ENCODE measurements at regions of chr15 and their contacts with region 1.

Region 1: GRCh38 chr15:92714477-92715401 is 59.2 kb upstream of the FAM174B start:
- DNase-seq: peak; percentile 71 to 83
- ATAC-seq: peak; percentile 92 to 94
- H3K4me3 ChIP-seq: peak overlapping the region; percentile 51
- H3K27ac ChIP-seq: peak overlapping the region; percentile 69 to 87
- H3K4me1 ChIP-seq: no peaks in the 10 kb centered on the region
- CTCF ChIP-seq: peak; percentile 99
- EP300 ChIP-seq: no peak
- POLR2A ChIP-seq: peak; percentile 49
- RAD21 ChIP-seq: peak; percentile 98 to 99

Region 2: DNA sequence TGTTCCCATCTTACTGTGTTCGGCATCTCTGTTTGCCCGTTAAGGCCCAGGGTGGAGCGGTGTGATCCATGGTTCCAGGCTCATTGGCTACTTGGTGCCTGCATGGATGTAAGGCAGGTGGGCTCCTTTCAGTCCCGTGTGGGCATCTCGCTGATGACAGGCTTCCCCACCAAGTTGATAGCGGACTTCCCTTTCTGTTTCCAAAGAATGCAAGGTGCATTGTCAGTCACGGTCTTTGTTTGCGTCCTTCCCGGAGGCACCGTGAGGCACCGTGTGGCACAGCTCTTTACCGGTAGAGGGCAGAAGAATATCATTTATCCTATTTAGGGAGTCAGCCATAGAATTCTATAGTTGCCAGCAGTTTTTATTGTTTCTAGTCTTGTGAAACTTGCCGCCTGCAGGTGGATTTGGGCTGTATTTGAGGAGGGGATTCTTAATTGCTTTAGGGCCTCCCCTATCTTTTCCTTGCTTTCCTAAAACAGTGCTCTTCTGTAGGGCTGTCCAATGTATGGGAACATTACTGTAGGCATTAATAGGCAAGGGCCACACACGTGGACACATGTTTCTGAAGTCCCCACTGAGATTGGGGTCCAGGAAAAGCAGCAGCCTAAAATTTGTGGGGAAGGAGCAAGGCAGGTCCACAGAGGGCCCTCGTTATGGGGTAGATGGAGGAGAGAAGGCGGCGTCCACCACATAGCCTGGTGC is 617.1 kb before region 1 on chr15:
- CTCF ChIA-PET with region 1: interaction called, 18 read pairs
- POLR2A ChIA-PET with region 1: no interaction called
- DNase-seq: peak; percentile 52 to 72
- ATAC-seq: peak; percentile 91 to 98
- H3K4me3 ChIP-seq: no peak overlapping the region
- H3K27ac ChIP-seq: no peak overlapping the region
- H3K4me1 ChIP-seq: no peaks in the 10 kb centered on the region
- CTCF ChIP-seq: peak; percentile 88
- EP300 ChIP-seq: no peak
- POLR2A ChIP-seq: no peak
- RAD21 ChIP-seq: peak; percentile 90 to 92

Region 3: DNA sequence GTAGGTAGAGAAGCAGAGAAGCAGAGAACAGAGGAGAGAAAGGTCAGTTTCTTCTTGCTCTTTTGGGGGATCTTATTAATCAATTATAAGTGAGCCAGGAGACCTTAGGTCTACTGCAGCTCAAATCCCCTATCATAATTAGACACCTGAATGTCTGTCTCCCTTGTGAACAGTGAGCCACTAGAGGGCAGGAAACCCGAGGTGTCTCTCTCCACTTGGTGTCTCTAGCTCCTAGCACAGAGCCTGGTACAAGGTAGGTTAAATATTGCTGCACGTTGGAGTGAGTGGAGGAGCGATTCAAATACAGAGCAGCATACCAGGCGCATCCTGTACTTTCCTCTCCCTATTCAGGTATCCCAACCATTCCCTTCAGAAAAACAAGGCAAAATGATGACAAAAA is 323.1 kb before region 1 on chr15:
- CTCF ChIA-PET with region 1: interaction called, 39 read pairs
- POLR2A ChIA-PET with region 1: no interaction called
- DNase-seq: peak; percentile 74 to 76
- ATAC-seq: peak; percentile 77 to 87
- H3K4me3 ChIP-seq: no peak overlapping the region
- H3K27ac ChIP-seq: no peak overlapping the region
- H3K4me1 ChIP-seq: peaks cover 9% of the 10 kb centered on the region; the same call in 1 of the 3 replicates
- CTCF ChIP-seq: peak; percentile 79
- EP300 ChIP-seq: no peak
- POLR2A ChIP-seq: no peak
- RAD21 ChIP-seq: peak; percentile 60 to 75

Region 4: DNA sequence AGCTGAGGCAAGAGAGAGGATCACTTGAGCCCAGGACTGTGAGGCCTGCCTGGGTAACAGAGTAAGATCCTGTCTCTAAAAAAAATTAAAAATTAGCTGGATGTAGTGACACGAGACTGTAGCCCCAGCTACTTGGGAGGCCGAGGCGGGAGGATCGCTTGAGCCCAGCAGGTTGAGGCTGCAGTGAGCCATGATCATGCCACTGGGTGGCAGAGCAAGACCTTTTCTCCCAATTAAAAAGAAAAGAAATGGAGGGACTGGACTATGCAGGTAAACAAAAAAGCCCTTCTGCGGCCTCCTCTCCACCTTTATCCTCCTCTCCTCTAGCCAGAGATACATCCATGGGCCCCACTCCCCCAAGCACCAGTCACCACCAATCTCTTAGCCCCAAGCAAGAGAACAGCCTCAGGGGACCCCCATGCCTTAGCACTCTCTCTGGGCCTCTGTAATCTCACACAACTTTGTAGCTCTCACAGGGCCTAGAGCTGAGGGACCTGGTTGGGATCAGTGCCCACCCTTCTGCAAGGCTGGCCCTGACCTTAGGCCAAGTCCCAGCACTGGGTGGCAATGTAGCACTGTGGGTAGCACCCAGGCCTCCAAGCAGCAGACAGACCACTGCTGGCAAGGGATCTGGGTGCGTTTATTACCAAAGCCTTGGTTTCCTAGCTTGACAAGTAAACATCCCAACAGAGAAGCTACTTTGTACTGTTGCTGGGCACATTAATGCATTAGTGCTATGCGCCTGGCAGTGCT is 102.6 kb before region 1 on chr15:
- CTCF ChIA-PET with region 1: interaction called, 18 read pairs
- POLR2A ChIA-PET with region 1: no interaction called
- DNase-seq: peak in 1 of 2 experiments; percentile 24
- ATAC-seq: peak; percentile 31 to 67; a peak in 4 of 6 replicates
- H3K4me3 ChIP-seq: no peak overlapping the region
- H3K27ac ChIP-seq: no peak overlapping the region
- H3K4me1 ChIP-seq: peaks cover 6% of the 10 kb centered on the region
- CTCF ChIP-seq: 0 out of 3 replicates have a peak, but pooled peaks have one; percentile 14
- EP300 ChIP-seq: no peak
- POLR2A ChIP-seq: no peak
- RAD21 ChIP-seq: peak in 1 of 2 experiments; percentile 48; a peak in 3 of 5 replicates

Region 5: DNA sequence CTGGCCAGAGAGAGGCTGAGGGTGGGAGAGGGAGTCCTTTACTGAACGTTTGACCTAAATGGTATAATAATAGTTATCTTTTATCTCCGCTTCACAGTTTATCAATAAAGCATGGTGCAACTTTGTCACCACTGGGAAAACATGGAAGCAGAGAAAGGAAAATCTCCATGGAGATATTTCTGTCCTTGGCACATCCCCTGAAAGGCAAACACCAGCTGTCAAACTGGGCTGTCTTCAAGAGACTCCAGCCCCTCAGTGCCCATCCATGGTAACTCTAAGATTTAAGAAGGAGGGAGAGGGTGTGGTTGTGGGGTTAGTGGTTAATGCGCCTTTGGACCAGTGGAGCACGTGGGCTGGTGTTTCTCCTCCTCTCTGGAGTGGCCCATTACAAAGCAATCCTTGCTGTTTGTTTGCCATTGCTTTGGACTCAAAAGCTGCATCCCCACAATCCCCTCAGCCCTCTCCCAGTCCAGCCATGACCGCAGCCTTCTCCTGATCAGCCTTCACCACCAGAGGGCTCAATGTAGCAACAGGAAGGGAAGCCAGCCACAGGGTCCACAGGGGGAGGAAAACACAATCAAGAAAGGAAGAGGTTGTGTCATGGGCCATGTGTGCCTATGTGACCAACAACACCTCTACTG is 20.9 kb before region 1 on chr15:
- CTCF ChIA-PET with region 1: interaction called, 30 read pairs
- POLR2A ChIA-PET with region 1: interaction called, 3 read pairs
- DNase-seq: peak; percentile 72 to 79
- ATAC-seq: peak; percentile 95 to 99
- H3K4me3 ChIP-seq: no peak overlapping the region
- H3K27ac ChIP-seq: no peak overlapping the region
- H3K4me1 ChIP-seq: no peaks in the 10 kb centered on the region
- CTCF ChIP-seq: peak; percentile 45
- EP300 ChIP-seq: no peak
- POLR2A ChIP-seq: no peak
- RAD21 ChIP-seq: peak; percentile 36 to 70; a peak in 4 of 5 replicates

Region 6: GRCh38 chr15:92733934-92734521 is 19.3 kb after region 1 on chr15:
- CTCF ChIA-PET with region 1: interaction called, 26 read pairs
- POLR2A ChIA-PET with region 1: interaction called, 8 read pairs
- DNase-seq: peak; percentile 48 to 80
- ATAC-seq: peak; percentile 91 to 96
- H3K4me3 ChIP-seq: peak overlapping the region; percentile 47
- H3K27ac ChIP-seq: peak overlapping the region; percentile 67 to 82
- H3K4me1 ChIP-seq: peaks cover 10% of the 10 kb centered on the region; the same call in 1 of the 3 replicates
- CTCF ChIP-seq: no peak
- EP300 ChIP-seq: no peak
- POLR2A ChIP-seq: no peak; the same call in 1 of the 2 replicates
- RAD21 ChIP-seq: no peak